ENCODE measurements at regions of chr14 and their contacts with region 1.

Region 1: DNA sequence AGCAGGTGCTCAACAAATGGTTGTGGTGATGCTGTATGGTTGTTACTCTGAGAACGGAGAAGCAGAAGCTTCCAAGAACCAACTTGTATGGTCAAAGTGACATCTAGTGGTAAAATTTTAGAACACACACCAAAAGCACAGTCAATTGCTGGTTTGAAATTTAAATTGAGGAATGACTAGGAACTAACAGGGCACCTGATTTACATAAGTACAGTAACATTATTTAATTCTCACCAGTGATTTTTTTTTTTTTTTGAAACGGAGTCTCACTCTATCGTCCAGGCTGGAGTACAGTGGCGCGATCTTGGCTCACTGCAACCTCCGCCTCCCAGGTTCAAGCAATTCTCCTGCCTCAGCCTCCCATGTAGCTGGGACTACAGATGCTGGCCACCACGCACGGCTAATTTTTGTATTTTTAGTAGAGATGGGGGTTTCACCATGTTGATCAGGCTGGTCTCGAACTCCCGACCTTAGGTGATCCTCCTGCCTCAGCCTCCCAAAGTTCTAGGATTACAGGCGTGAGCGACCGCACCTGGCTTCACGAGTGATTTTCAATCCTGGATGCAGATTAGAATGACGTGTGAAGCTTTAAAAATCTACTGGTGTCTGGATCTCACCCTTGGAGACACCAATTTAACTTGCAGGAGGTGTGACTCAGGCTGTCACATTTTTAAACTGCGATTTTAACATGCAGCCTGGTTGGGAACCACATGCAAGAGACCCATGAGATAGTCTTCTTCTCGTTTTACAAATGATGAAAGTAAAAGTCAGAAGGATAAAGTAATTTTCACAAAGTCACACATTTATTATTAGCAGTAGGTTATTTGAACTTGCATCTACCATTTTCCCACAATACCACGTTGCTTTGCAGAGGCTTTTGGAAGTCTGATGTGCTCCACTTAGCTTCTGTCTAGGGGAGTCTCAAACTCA is 14.1 kb upstream of the NUMB start:
- DNase-seq: no peak
- ATAC-seq: peak; percentile 86

Region 2: DNA sequence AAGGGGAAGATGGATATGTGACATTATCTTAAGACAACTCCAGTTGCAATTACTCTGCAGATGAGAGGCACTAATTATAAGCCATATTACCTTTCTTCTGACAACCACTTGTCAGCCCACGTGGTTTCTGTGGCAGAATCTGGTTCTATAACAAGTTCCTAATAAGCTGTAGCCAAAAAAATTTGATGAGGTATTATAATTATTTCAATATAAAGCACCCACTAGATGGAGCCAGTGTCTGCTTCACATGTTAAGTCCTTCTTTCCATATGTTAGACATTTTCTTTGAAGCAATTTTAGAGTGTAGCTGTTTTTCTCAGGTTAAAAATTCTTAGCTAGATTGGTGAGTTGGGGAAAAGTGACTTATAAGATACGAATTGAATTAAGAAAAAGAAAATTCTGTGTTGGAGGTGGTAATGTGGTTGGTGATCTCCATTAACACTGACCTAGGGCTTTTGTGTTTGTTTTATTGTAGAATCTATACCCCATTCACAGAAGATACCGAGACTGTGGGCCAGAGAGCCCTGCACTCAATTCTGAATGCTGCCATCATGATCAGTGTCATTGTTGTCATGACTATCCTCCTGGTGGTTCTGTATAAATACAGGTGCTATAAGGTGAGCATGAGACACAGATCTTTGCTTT is 299.2 kb before region 1 on chr14:
- intact Hi-C with region 1: loop called (anchors 5 kb)
- DNase-seq: no peak
- ATAC-seq: no peak

Region 3: GRCh38 chr14:73295198-73295796 is 177.2 kb before region 1 on chr14:
- intact Hi-C with region 1: loop called (anchors 5 kb)
- DNase-seq: no peak
- ATAC-seq: no peak